Posterior vena cava (tissue), 2 donors: ENCODE measurements at regions of chr6 and their contacts with region 1.

Region 1: DNA sequence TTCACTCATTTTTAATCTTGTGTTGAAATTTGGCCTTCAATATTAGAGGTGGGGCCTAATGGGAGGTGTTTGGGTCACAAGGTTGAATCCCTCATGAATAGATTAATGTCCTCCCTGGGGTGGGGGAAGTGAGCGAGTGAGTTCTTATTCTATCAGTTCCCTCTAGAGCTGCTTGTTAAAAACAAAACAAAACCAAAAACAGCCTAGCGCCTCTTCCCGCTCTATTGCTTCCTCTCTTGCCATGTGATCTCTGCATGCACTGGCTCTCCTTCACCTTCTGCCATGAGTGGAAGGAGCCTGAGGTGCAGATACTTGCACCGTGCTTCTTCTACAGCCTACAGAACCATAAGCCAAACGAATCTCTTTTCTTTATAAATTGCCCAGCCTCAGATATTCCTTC is 89.6 kb upstream of the SLC35F1 start:
- DNase-seq: no peak

Region 2: DNA sequence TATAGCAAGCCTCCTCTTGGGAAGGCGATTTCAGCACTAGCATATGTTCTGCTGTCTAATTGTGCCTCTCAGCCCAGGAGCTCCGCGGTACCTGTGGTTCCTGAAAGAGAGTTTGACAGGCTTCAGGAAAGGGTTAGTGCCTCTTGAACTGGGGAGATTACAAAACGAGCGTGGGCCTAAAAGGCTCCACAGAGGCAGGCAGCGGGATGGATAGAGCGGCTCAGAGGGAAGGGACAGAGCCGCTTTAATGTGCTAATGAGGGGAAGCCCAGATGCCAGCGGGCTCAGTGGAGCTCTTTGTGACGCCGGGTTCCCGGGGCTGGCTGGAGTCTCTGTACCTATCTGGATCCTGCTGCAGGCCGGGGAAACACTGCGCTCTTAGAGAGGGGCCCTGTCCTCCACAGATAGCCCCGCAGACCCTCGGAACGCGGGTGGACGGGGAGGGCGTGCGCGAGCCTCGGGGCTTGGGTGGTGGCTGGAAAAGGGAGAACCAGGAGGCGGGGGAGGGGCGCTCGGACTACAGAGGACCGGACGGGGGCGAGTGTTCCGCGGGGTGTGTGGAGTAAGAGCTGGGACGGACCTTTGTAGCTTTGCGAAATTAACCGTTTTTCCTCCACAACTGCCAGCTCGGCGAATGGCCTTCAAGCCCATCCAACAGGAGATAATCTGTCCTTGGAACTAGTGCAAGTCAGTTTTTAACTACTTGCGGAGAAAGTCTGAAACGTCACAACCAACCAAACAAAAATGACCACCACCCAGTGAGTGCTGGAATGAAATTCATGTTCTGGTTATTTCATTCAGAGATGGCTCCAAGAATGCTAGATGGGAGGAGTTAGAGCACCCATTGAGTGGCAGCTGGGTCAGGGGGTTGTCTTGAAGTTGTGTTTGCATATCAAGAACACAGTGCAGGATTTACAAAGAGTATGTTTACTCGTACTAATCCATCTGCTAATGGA is 102.6 kb after region 1 on chr6:
- intact Hi-C with region 1: loop called in 1 of 2 experiments (anchors 10 kb)
- DNase-seq: peak; percentile 75